ENCODE measurements at regions of chr13 and their contacts with region 1.

Region 1: GRCh38 chr13:52793515-52794061 is 54.0 kb upstream of the CNMD start:
- DNase-seq: no peak
- H3K4me3 ChIP-seq: no peak overlapping the region
- H3K27ac ChIP-seq: no peak overlapping the region
- H3K27me3 ChIP-seq: peaks cover 0 to 7% (median 0%) of the 10 kb centered on the region in 45 donors
- CTCF ChIP-seq: no peak

Region 2: GRCh38 chr13:52738719-52739467 is 54.7 kb before region 1 on chr13:
- intact Hi-C with region 1: no loop called
- DNase-seq: peak in 6 of 10 donors; percentile 20 to 64 (median 51)
- H3K4me3 ChIP-seq: peak overlapping the region; percentile 33 to 80 (median 64)
- H3K27ac ChIP-seq: peak overlapping the region in 7 of 59 donors; percentile 2 to 64 (median 29)
- H3K27me3 ChIP-seq: peaks cover 0 to 40% (median 11%) of the 10 kb centered on the region in 45 donors
- CTCF ChIP-seq: peak in 52 of 56 donors; percentile 32 to 88 (median 64)

Region 3: DNA sequence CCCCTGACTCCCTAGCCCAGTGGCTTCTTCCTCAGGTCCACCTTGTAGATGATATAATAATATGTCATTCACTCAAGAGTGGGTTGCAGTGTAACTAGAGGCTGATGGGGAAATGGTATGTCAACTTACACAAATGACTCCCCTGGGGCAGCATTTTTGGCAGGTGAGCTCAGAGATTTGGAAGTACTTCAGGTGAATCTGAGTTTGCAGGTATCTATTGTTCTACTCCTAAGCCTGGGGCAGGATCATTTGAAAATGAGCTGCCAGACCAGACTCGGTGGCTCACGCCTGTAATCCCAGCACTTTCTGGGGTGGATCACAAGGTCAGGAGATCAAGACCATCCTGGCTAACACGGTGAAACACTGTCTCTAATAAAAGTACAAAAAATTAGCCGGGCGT is 42.4 kb before region 1 on chr13:
- intact Hi-C with region 1: loop called in 1 of 2 experiments (anchors 1 kb)
- DNase-seq: no peak
- H3K4me3 ChIP-seq: no peak overlapping the region
- H3K27ac ChIP-seq: no peak overlapping the region
- H3K27me3 ChIP-seq: peaks cover 0 to 9% (median 0%) of the 10 kb centered on the region in 45 donors
- CTCF ChIP-seq: no peak

Region 4: DNA sequence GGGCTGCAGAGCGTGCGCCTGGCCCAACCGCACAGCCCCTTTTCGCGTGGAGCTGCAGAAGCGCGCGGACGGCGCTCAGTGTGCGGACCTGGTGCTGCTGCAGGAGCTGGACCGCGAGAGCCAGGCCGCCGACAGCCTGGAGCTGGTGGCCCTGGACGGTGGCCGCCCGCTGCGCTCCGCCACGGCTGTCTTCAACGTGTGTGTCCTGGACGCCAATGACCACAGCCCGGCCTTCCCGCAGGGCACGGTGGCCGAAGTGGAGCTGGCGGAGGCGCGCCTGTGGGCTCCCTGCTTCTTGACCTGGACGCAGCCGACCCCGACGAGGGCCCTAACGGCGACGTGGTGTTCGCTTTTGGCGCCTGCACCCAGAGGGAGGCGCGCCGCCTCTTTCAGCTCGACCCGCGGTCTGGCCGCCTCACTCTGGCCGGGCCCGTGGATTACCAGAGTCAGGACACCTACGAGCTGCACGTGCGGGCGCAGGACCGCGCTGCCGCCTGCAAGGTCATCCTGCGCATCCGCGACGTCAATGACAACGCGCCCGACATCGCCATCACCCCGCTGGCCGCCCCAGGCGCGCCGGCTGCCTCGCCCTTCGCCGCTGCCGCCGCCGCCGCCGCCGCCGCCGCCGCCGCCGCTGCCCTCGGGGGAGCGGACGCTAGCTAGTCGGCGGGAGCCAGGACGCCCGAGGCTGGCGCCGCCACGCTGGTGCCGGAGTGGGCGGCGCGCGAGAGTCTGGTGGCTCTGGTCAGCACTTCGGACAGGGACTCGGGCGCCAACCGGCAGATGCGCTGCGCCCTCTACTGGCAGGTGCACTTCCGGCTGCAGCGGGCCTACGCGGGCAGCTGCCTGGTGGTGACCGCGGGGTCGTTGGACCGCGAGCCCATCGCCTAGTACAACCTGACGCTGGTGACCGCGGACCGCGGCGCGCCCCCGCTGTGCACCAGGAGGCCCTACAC is 407.2 kb after region 1 on chr13:
- intact Hi-C with region 1: no loop called
- DNase-seq: peak in 2 of 10 donors; percentile 20 to 43
- H3K4me3 ChIP-seq: peak overlapping the region in 18 of 59 donors; percentile 2 to 44 (median 30)
- H3K27ac ChIP-seq: no peak overlapping the region
- H3K27me3 ChIP-seq: peaks cover 0 to 47% (median 22%) of the 10 kb centered on the region in 45 donors
- CTCF ChIP-seq: peak in 52 of 56 donors; percentile 13 to 62 (median 44)

Region 5: GRCh38 chr13:53398051-53398450 is 604.5 kb after region 1 on chr13:
- intact Hi-C with region 1: no loop called
- DNase-seq: no peak
- H3K4me3 ChIP-seq: no peak overlapping the region
- H3K27ac ChIP-seq: peak overlapping the region in 1 of 59 donors; percentile 8
- H3K27me3 ChIP-seq: no peaks in the 10 kb centered on the region
- CTCF ChIP-seq: no peak

Measured in dorsolateral prefrontal cortex (tissue), 120 donors.